ENCODE measurements at regions of chr2 and their contacts with region 1.

Region 1: GRCh38 chr2:96760036-96760985 is at the start of gene CNNM4:
- DNase-seq: peak; percentile 88 to 99 (median 93)
- H3K4me3 ChIP-seq: peak within 1 kb of the TSS; percentile 53 to 88 (median 77)
- H3K27ac ChIP-seq: peak within 1 kb of the TSS in 58 of 59 donors; percentile 16 to 92 (median 82)
- H3K27me3 ChIP-seq: no peaks in the 10 kb centered on the region
- CTCF ChIP-seq: peak in 38 of 56 donors; percentile 4 to 66 (median 39)
- total RNA-seq, gene CNNM4: 9.3 to 21.2 (median 13.1) TPM

Region 2: DNA sequence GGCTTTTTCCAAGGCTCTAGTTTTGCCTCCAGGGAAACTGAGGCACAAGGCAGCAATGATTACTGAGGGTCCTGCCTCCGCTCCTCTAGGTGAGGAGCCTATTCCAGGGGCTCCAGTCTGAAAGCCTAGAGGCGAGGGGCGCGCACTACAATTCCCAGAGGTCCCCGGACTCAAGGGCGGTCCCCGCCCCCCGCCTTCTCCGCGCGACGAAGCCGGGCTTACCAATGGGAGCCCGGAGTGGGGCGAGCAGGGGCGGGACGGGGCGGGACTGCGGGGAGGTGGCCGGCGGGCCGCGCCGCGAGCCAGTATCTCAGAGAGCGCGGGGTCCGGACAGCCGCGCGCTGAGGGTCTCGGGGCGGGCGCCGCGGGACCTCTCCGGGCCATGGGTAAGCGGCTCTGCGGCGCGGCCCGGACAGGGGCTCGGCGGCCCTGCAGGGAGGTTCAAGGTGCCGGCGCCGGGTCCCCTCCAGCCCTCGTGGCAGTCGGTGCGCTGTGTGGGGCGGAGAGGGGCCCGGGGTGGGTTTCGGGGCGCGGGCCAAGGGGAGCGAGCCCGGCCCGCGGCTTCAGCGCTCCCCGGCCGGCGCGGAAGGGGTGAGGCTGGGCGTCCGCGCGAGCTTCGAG is 223.8 kb before region 1 on chr2 and contains the start of gene ARID5A:
- intact Hi-C with region 1: loop called in 1 of 2 experiments (anchors 10 kb)
- DNase-seq: peak; percentile 87 to 95 (median 93)
- H3K4me3 ChIP-seq: peak within 1 kb of the TSS; percentile 66 to 98 (median 89)
- H3K27ac ChIP-seq: peak within 1 kb of the TSS; percentile 51 to 97 (median 90)
- H3K27me3 ChIP-seq: no peaks in the 10 kb centered on the region
- CTCF ChIP-seq: peak; percentile 26 to 71 (median 55)
- total RNA-seq, gene ARID5A: 9.3 to 61.4 (median 19.7) TPM

Region 3: GRCh38 chr2:96739633-96740428 is 20.5 kb before region 1 on chr2 and contains the start of gene LMAN2L:
- intact Hi-C with region 1: loop called in 1 of 2 experiments (anchors 1 kb)
- DNase-seq: peak; percentile 95 to 100 (median 98)
- H3K4me3 ChIP-seq: peak within 1 kb of the TSS; percentile 61 to 99 (median 84)
- H3K27ac ChIP-seq: peak within 1 kb of the TSS in 56 of 59 donors; percentile 41 to 91 (median 76)
- H3K27me3 ChIP-seq: no peaks in the 10 kb centered on the region
- CTCF ChIP-seq: peak in 29 of 56 donors; percentile 7 to 52 (median 30)
- total RNA-seq, gene LMAN2L: 10.1 to 30.4 (median 15.9) TPM

Region 4: DNA sequence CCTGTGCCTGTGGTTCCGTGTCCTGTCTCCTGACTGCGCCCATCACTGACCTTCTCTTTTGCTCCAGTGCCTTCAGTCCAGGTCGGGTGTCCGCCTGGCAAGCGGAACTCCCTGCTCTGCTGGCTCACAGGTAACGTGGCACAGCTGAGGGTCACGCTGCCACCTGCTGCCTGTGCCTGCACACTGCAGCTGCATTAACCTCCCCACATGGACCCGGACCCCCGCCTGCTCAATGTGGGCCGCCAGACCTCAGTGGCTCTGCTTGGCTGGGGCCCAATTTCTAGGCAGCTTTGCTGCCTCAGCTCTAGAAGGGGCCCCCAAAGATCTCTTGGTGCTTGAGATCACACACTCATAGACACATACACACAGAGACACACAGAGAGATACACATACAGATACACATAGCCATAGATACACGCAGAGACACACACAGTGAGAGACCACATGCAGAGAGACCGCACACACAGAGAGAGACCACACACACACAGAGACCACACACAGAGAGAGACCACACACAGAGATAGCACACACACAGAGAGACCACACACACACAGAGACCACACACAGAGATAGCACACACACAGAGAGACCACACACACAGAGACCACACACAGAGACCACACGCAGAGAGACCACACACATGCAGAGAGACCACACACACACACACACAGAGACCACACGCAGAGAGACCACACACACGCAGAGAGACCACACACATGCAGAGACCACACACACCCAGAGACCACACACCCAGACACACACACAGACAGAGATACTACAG is 40.9 kb after region 1 on chr2:
- intact Hi-C with region 1: no loop called
- DNase-seq: peak; percentile 58 to 85 (median 76)
- H3K4me3 ChIP-seq: no peak overlapping the region
- H3K27ac ChIP-seq: peak overlapping the region in 3 of 59 donors; percentile 6 to 28 (median 11)
- H3K27me3 ChIP-seq: no peaks in the 10 kb centered on the region
- CTCF ChIP-seq: peak in 55 of 56 donors; percentile 48 to 84 (median 77)

Region 5: GRCh38 chr2:96816128-96816835 is 56.0 kb after region 1 on chr2 and contains the start of gene CNNM3:
- intact Hi-C with region 1: loop called (anchors 2 to 10 kb)
- DNase-seq: peak; percentile 89 to 98 (median 96)
- H3K4me3 ChIP-seq: peak within 1 kb of the TSS; percentile 62 to 94 (median 82)
- H3K27ac ChIP-seq: peak within 1 kb of the TSS; percentile 92 to 99 (median 98)
- H3K27me3 ChIP-seq: no peaks in the 10 kb centered on the region
- CTCF ChIP-seq: peak in 55 of 56 donors; percentile 23 to 80 (median 60)
- total RNA-seq, gene CNNM3: 15.1 to 52.1 (median 34.2) TPM

Region 6: GRCh38 chr2:96868555-96869280 is 108.4 kb after region 1 on chr2:
- intact Hi-C with region 1: loop called in 1 of 2 experiments (anchors 10 kb)
- DNase-seq: peak in 9 of 10 donors; percentile 57 to 83 (median 67)
- H3K4me3 ChIP-seq: peak overlapping the region; percentile 70 to 99 (median 91)
- H3K27ac ChIP-seq: peak overlapping the region; percentile 67 to 100 (median 99)
- H3K27me3 ChIP-seq: no peaks in the 10 kb centered on the region
- CTCF ChIP-seq: peak; percentile 29 to 88 (median 66)